Activated CD4-positive, alpha-beta memory T cell treated with anti-CD3 and anti-CD28 coated beads for 36 hours (primary cell): ENCODE measurements at regions of chr15 and their contacts with region 1.

Region 1: DNA sequence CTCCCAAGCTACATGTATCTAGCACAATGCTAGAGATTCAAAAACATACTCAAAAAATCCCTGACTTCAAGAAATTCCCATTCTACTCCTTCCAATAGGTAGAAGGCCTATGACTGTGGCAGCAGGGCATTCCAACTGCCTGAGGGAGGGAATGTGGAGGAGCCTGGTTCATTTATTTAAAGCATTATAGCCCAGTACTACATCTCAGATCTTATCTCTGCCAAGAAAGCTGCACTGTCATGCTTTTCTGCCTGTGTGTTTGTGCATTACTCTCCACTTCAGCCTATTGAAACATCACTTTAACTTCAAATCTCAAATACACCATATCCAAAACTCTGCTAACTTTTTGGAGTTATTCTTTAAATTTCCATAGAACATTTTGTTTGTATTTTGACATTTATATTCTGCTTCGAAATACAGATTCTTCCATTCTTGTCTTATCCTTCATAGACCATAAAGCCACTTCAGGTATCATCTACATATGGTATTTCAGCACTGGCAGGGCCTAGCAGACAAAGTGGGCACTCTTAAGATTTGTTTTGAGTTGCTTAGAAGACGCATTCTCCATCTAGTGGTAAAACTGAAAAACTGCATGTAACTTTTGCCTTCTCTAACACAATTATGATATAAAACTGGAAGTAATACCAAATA is 59.1 kb upstream of the NEDD4 start:
- DNase-seq: no peak
- H3K4me3 Mint-ChIP-seq: no peak overlapping the region
- H3K27ac Mint-ChIP-seq: no peak overlapping the region
- H3K4me1 Mint-ChIP-seq: no peaks in the 10 kb centered on the region
- H3K27me3 Mint-ChIP-seq: no peaks in the 10 kb centered on the region

Region 2: DNA sequence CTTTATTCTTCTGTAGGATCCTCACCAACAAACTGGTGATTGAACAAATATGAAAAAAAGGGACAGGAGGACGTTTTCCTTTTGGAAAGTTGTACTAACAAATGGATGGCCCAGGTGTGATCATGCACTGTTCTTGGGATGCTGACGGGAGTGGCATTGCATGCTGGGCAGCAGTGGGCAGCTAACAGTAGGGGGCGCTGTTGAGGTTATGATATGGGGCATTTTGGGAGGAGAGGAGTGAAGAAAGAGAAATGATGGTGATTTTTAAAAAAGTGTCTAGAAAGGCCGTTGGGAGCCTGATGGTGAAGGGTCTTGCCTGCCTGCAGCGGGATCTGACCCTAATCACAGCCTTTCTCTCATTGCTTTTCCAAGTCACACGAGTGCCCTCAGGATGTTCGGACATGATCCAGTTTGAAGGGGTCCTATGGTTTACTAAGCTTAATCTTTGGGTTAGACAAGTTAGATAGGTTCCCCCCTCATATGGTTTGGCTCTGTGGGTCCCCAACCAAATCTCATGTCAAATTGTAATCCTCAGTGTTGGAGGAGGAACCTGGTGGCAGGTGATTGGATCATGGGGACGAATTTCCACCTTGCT is 263.4 kb before region 1 on chr15:
- CTCF ChIA-PET with region 1: interaction called, 5 read pairs
- POLR2A ChIA-PET with region 1: no interaction called
- intact Hi-C with region 1: loop called (anchors 5 kb)
- DNase-seq: peak; percentile 73
- H3K4me3 Mint-ChIP-seq: no peak overlapping the region
- H3K27ac Mint-ChIP-seq: no peak overlapping the region
- H3K4me1 Mint-ChIP-seq: no peaks in the 10 kb centered on the region
- H3K27me3 Mint-ChIP-seq: peaks cover 6% of the 10 kb centered on the region

Region 3: DNA sequence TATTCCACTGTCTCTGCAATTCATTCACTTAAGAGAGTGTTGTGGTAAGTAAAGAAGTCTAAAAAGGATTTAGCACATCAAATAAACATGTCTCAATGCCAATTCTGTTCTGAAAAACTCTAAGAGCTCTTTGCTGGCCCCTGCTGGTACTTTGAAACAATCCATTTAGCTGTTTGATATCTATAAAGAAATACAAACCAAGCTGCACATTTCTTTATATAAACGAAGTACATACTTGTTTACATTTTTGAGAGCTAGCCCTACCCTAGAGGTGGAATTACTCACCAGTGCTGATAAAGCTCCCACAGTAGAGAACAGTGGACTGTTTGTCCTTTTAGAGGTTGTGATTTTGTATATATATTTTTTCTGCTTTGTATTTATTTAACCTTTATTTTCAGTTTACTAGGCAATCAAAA is 134.6 kb before region 1 on chr15:
- CTCF ChIA-PET with region 1: no interaction called
- POLR2A ChIA-PET with region 1: no interaction called
- intact Hi-C with region 1: loop called (anchors 5 kb)
- DNase-seq: no peak
- H3K4me3 Mint-ChIP-seq: no peak overlapping the region
- H3K27ac Mint-ChIP-seq: no peak overlapping the region
- H3K4me1 Mint-ChIP-seq: no peaks in the 10 kb centered on the region
- H3K27me3 Mint-ChIP-seq: no peaks in the 10 kb centered on the region

Region 4: DNA sequence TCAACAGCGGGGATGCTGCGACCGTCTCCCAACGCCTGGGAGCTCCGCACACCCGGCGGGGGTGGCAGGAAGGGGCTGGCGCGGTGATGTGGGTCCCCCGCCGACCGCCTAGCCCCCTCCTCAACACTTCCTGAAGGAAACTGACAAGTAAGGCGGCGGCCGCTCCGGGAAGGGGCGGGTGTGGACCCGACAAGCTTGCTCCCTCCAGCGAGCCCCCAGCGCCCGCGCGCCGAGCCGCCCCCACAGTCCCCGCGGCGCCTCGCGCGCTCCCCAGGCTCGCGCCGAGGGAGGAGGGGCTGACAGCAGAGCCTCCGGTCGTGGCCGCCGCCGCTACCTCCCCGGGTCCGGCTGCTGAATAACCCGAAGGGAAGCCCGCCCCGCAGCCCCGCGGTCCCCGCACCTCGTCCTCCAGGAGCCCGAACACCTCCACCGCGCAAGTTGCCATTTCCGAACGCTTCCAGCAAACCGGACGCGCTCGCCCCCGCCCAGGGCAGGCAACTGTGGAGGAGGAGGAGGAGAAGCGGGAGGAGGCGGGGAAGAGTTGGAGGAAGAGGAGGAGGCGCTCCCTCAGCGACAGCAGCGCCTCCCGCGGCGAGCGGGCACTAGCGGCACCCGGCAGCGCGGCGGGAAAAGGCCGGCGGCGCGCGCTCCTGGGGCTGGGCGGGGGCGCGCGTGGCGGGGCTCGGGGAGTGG is 59.3 kb before region 1 on chr15 and contains the start of gene NEDD4:
- CTCF ChIA-PET with region 1: interaction called, 3 read pairs
- POLR2A ChIA-PET with region 1: no interaction called
- intact Hi-C with region 1: loop called (anchors 2 kb)
- DNase-seq: peak; percentile 81
- H3K4me3 Mint-ChIP-seq: peak within 1 kb of the TSS; percentile 81
- H3K27ac Mint-ChIP-seq: peak within 1 kb of the TSS; percentile 61
- H3K4me1 Mint-ChIP-seq: peaks cover 23% of the 10 kb centered on the region
- H3K27me3 Mint-ChIP-seq: peaks cover 11% of the 10 kb centered on the region
- total RNA-seq, gene NEDD4: 18.5 to 18.7 TPM

Region 5: DNA sequence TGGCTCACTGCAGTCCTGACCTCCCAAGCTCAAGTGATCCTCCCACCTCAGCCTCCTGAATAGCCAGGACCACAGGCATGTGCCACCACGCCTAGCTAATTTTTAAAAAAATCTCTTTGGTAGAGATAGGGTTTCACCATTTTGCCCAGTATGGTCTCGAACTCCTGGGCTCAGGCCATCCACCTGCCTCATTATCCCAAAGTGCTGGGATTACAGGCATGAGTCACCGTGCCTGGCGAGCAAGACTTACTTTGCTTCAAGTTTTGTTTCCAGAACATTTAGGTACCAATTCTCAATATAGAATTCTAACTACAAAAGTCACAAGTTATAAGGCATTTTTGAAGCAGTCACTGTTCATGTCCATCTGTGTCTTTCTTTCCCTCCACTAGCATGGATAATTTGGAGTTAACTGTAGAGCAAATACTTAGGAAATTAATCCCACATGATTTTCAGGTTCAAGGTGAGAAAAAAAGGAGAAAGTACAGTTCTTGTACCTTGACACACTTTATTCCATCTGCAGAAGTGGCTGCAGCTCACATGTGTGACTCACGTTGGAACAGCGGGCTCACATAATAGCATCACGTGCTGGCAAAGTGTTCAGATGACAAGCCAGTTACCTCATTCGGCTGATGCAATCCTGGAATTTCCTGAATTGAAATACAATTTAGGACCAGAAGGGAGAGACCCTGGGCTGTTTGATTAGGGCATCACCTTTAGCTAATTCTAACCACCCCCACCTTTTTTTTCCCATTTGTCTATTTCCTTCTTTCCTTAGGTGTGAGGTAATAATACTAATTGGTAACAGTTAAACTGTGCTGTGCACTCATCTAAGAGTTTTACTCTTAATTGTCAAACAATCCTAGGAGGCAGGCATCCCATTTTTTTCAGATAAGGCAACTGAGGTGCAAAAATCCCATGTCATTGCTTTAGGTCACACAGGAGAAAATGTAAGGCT is 12.2 kb before region 1 on chr15:
- CTCF ChIA-PET with region 1: interaction called, 11 read pairs
- POLR2A ChIA-PET with region 1: no interaction called
- intact Hi-C with region 1: no loop called
- DNase-seq: peak; percentile 44
- H3K4me3 Mint-ChIP-seq: no peak overlapping the region
- H3K27ac Mint-ChIP-seq: peak overlapping the region; percentile 64
- H3K4me1 Mint-ChIP-seq: peaks cover 55% of the 10 kb centered on the region
- H3K27me3 Mint-ChIP-seq: no peaks in the 10 kb centered on the region

Region 6: DNA sequence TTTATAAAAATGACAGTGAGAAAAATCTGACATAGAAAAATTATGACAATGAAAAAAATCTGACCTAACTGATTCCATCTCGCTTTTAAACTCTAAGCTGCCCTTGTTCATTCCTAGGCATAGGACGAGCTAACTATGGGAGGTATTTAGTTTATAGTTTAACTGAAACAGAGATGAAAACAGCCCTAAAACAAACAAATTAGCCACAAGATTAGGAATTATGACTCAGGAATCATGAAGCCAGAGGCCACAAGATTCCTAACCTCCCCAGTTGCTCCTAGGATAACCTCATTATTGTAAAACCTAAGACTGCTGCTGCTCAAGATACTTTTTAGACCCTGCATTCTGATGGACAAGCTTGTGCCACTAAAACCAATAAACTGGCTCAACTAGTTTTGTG is 535.2 kb after region 1 on chr15:
- CTCF ChIA-PET with region 1: no interaction called
- POLR2A ChIA-PET with region 1: no interaction called
- intact Hi-C with region 1: no loop called
- DNase-seq: no peak
- H3K4me3 Mint-ChIP-seq: no peak overlapping the region
- H3K27ac Mint-ChIP-seq: no peak overlapping the region
- H3K4me1 Mint-ChIP-seq: no peaks in the 10 kb centered on the region
- H3K27me3 Mint-ChIP-seq: peaks cover 2% of the 10 kb centered on the region